ENCODE measurements at regions of chr3 and their contacts with region 1.

Region 1: DNA sequence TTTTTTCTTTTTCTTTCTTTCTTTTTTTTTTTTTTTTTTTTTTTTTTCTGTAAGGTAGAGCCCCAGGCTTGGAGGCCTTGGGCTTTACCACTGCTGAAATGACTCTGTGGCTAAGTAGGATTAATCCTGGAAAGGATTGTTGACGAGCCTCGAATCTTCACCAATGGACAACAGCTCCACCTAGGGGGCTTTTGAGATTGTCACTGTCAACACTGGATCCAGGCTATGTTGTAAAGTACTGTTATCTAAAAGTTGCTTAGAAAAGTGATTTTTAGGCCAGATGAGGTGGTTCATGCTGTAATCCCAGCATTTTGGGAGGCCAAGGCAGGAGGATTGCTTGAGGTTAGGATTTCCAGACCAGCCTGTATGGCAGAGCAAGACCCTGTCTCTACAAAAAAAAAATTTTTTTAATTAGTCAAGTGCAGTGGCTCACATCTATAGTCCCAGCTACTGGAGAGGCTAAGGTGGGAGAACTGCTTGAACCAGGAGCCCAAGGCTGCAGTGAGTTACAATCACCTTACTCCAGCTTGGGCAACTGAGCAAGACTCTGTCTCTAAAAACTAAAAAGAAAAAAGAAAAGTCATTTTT is 41.6 kb downstream of the KLHL18 start:
- DNase-seq: peak; percentile 77
- H3K4me3 ChIP-seq: no peak overlapping the region
- H3K27ac ChIP-seq: no peak overlapping the region
- H3K4me1 ChIP-seq: no peaks in the 10 kb centered on the region
- H3K27me3 ChIP-seq: no peaks in the 10 kb centered on the region
- CTCF ChIP-seq: peak; percentile 60 to 72
- POLR2A ChIP-seq: no peak

Region 2: GRCh38 chr3:47009225-47010110 is 314.9 kb before region 1 on chr3:
- CTCF ChIA-PET with region 1: interaction called, 6 read pairs
- POLR2A ChIA-PET with region 1: no interaction called
- dilution Hi-C with region 1: no loop called
- intact Hi-C with region 1: loop called (anchors 2 kb)
- DNase-seq: peak; percentile 91
- H3K4me3 ChIP-seq: peak overlapping the region in 2 of 3 experiments; percentile 53 to 56
- H3K27ac ChIP-seq: peak overlapping the region; percentile 71
- H3K4me1 ChIP-seq: peaks cover 6% of the 10 kb centered on the region
- H3K27me3 ChIP-seq: no peaks in the 10 kb centered on the region
- CTCF ChIP-seq: peak in 1 of 2 donors; percentile 13
- POLR2A ChIP-seq: peak; percentile 95

Region 3: DNA sequence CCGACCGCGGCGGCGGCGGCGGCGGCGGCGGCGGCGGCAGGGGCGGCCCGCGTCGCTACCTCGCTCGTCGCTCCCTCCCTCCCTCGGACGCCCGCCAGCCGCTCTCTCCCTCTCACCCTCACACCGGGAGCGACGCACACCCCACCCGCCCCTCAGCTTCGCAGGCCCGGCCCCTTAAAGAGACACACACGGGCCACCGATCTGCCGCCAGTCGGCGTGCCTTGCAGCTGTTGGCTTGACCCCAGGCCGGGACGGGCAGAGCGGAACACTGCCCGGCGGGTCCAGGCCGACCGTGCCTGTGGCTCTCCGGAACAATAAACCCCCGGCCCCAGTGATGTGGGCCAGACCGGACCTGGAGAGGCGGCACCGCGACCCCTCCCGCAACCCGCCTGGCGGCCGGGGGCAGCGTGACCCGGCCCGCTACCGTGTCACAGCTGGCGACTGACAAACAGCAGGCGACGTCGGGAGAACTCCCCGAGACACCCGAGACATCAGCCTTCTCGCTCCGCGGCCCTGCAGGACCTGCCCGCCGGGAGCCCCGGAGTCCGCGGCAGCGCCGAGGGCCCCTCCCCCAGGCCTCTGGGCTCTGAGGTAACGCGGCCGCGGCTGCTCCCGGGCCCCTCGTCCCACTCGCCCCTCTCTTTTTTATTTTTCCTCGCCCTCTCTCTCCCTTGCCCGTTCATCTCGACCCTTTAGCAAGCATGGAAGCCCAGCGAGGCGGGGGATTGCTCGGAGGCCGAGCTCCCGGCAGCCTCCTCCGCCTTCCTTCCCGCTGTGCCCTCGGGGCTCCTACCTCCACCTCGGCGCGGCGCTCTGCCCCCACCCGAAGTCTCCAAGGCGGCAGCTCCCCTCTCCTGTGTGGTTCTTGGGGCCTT is 160.1 kb before region 1 on chr3 and contains the start of gene SETD2:
- CTCF ChIA-PET with region 1: interaction called, 15 read pairs
- POLR2A ChIA-PET with region 1: no interaction called
- dilution Hi-C with region 1: no loop called
- intact Hi-C with region 1: no loop called
- DNase-seq: peak; percentile 90
- H3K4me3 ChIP-seq: peak within 1 kb of the TSS; percentile 58 to 97 (median 88)
- H3K27ac ChIP-seq: peak within 1 kb of the TSS; percentile 78
- H3K4me1 ChIP-seq: peaks cover 19% of the 10 kb centered on the region
- H3K27me3 ChIP-seq: no peaks in the 10 kb centered on the region
- CTCF ChIP-seq: peak in 1 of 2 donors; percentile 21
- POLR2A ChIP-seq: peak; percentile 31
- total RNA-seq, gene SETD2: 36.2 and 41.4 TPM in 2 replicates

Region 4: GRCh38 chr3:47274652-47275051 is 49.7 kb before region 1 on chr3:
- CTCF ChIA-PET with region 1: interaction called, 13 read pairs
- POLR2A ChIA-PET with region 1: no interaction called
- dilution Hi-C with region 1: no loop called
- intact Hi-C with region 1: no loop called
- DNase-seq: no peak
- H3K4me3 ChIP-seq: no peak overlapping the region
- H3K27ac ChIP-seq: no peak overlapping the region
- H3K4me1 ChIP-seq: no peaks in the 10 kb centered on the region
- H3K27me3 ChIP-seq: no peaks in the 10 kb centered on the region
- CTCF ChIP-seq: no peak
- POLR2A ChIP-seq: no peak

Region 5: DNA sequence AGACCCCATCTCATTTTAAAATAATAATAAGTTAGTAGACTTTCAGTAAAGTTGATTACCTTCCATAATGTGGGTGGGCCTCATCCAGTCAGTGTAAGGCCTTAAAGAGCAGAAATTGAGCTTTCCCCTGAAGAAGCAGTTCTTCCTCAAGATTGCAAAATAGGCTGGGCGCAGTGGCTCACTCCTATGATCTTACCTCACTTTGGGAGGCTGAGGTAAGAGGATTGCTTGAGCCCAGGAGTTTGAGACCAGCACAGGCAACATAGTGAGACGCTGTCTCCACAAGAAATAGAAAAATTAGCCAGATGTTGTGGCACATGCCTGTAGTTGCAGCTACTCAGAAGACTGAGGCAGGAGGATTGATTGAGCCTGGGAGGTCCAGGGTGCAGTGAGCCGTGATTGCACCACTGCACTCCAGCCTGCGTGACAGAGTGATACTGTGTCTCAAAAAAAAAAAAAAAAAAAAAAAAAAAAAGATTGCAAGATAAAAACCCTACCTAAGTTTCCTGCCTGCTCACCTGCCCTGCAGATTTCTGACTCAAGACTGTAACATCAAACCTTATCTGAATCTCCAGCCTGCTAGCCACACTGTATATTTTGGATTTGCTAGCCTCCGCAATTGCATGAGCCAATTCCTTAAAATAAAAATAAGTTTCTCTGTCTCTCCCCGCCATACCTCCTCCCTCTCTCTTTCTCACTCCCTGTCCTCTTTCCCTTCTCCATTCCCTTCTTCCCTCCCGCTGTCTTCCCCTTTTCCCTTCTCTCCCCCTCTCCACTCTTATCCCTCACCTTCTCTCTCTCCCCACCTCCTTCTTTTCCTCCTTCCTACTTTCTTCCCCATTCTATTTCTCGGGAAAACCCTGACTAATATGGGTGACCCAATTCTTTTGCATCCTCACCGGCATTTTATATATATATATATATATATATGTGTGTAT is 24.7 kb before region 1 on chr3:
- CTCF ChIA-PET with region 1: interaction called, 14 read pairs
- POLR2A ChIA-PET with region 1: no interaction called
- dilution Hi-C with region 1: no loop called
- intact Hi-C with region 1: no loop called
- DNase-seq: no peak
- H3K4me3 ChIP-seq: no peak overlapping the region
- H3K27ac ChIP-seq: no peak overlapping the region
- H3K4me1 ChIP-seq: peaks cover 7% of the 10 kb centered on the region
- H3K27me3 ChIP-seq: no peaks in the 10 kb centered on the region
- CTCF ChIP-seq: no peak
- POLR2A ChIP-seq: no peak

Measured in endothelial cell of umbilical vein (primary cell).